ENCODE measurements at regions of chr1 and their contacts with region 1.

Region 1: DNA sequence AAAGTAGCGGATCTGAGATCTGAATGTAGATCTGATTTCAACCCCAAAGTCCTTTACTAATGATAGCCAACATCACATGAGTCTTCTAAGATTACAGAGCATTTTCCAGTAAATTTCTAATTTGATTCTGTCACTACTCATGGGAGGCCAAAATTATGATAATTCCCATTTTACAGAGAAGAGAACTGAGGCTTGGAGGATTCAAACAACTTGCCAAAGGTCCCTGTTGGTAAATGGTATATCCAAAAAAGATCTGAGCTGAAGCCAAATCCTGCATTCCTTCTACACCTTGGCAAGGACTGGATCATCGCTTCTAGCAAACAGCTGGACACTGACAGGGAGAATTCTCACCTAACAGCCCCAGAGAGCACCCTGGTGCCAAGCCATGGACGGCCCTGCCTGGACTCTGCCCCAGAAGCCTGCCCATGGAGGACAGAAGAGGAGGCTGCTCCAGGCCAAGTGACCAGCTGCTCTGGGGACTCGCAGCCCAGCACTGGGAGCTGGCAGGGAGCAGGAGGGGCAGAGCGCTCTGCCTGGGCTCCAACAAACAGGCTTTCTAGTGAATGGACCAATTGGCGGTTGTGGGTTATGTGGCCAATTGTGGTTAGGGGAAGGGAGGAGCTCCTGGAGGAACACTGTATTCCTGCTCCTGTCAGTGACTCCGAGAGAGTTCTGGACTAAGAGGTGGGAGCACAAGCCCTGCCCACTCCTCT is 6.4 kb upstream of the CSF1 start:
- DNase-seq: peak; percentile 22 to 92 (median 87)
- H3K4me3 ChIP-seq: peak overlapping the region in 5 of 59 donors; percentile 1 to 28 (median 5)
- H3K27ac ChIP-seq: peak overlapping the region in 57 of 59 donors; percentile 16 to 92 (median 80)
- H3K27me3 ChIP-seq: no peaks in the 10 kb centered on the region
- CTCF ChIP-seq: peak in 14 of 56 donors; percentile 4 to 48 (median 23)

Region 2: GRCh38 chr1:109883248-109883955 is 20.9 kb before region 1 on chr1:
- intact Hi-C with region 1: loop called in 1 of 2 experiments (anchors 1 kb)
- DNase-seq: no peak
- H3K4me3 ChIP-seq: no peak overlapping the region
- H3K27ac ChIP-seq: peak overlapping the region; percentile 58 to 99 (median 93)
- H3K27me3 ChIP-seq: no peaks in the 10 kb centered on the region
- CTCF ChIP-seq: no peak